AG04449 (cell line): ENCODE measurements at regions of chr16 and their contacts with region 1.

Region 1: DNA sequence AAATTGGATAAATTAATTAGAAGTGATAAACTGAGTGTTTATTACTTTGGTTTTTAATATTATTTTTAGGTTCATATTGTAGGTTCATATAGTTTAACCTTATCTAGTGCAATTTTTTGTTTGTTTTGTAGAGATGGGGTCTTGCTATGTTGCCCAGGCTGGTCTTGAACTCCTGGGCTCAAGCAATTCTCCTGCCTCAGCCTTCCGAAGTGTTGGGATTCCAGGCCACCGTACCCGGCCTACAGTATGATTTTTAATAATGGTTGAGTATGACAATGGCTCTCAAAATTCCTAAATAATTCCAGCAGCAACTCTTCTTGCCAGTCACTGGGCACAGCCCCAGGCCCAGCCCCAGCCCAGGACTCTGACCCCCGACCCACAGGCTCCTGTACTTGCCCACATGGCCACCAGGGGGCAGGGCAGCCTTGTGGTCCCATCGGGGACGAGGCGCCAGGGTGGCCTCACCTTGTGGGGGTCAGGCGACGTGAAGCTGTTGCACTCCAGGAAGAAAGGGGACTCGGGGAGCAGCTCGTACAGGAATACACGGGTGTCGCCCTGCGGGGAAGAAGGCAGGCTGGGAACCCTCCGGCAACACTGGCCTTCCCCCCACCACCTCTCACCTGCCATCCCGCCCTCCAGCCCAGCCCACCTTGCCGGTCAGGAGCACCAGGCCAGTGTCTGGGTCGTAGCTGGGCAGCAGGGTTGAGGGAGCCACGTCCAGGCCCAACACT is 7.9 kb upstream of the PAM16 start:
- DNase-seq: no peak
- H3K4me3 ChIP-seq: no peak overlapping the region
- CTCF ChIP-seq: peak; percentile 95

Region 2: GRCh38 chr16:4176612-4177417 is 182.2 kb before region 1 on chr16:
- CTCF ChIA-PET with region 1: no interaction called
- POLR2A ChIA-PET with region 1: no interaction called
- DNase-seq: no peak
- H3K4me3 ChIP-seq: no peak overlapping the region
- CTCF ChIP-seq: no peak

Region 3: DNA sequence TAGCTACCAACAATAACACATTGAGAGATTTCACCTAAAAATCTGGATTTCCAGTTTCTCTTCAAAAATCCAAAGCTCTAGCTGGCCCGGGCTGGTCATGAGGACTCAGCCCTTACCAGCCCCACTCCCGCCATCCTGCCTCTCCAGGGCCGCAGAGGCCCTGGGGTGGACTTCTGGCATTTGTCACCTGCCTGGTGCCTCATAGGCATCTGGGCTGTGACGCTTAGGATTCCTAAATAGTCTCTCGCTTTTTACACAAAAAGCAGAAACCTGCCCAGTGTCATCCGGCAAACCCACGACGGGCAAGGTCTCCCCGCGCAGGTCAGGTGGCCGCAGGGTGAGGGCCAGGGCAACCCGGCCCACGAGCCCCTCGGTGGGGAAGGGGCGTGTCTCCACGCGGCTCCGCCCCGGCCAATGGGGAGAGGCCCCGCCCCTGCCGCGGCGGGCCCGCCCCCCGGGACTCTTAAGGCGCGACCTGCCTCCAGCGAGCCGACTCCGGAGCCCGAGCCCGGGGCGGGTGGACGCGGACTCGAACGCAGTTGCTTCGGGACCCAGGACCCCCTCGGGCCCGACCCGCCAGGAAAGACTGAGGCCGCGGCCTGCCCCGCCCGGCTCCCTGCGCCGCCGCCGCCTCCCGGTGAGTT is 12.5 kb after region 1 on chr16 and contains the start of gene VASN:
- CTCF ChIA-PET with region 1: interaction called, 81 read pairs
- POLR2A ChIA-PET with region 1: interaction called, 5 read pairs
- DNase-seq: no peak
- H3K4me3 ChIP-seq: peak within 1 kb of the TSS; percentile 93
- CTCF ChIP-seq: no peak

Region 4: DNA sequence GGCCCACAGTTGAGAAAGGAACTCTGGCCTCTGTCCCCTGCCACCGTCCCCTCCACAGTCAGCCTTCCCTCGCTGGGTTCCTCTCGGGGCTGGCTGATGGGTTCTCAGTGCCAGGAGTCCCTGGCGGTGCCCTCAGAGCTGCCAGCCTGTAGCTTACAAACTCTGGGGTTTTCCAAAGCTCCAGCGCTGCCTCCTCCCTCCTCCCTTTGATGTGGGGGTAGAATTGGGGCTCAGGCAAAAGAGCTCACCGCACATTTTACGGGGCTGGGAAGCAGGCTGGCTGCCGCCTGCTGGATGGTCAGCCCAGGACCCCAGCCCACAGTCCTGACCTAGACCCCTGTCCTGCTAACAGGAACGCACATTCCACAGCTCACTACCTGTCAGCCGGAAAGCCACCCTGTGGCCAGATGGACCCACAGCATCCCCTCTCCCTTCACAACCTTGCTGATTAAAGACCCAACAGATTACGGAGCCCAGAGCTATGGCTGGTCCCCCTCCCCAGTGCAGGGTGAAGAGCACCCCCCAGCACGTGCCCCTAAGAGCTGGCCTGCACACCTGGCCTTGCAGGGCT is 18.7 kb after region 1 on chr16:
- CTCF ChIA-PET with region 1: interaction called, 32 read pairs
- POLR2A ChIA-PET with region 1: no interaction called
- DNase-seq: no peak
- H3K4me3 ChIP-seq: no peak overlapping the region; the same call in 1 of the 2 replicates
- CTCF ChIP-seq: peak; percentile 6

Region 5: GRCh38 chr16:4392382-4393239 is 33.6 kb after region 1 on chr16:
- CTCF ChIA-PET with region 1: interaction called, 65 read pairs
- POLR2A ChIA-PET with region 1: no interaction called
- DNase-seq: no peak
- H3K4me3 ChIP-seq: no peak overlapping the region
- CTCF ChIP-seq: no peak

Region 6: DNA sequence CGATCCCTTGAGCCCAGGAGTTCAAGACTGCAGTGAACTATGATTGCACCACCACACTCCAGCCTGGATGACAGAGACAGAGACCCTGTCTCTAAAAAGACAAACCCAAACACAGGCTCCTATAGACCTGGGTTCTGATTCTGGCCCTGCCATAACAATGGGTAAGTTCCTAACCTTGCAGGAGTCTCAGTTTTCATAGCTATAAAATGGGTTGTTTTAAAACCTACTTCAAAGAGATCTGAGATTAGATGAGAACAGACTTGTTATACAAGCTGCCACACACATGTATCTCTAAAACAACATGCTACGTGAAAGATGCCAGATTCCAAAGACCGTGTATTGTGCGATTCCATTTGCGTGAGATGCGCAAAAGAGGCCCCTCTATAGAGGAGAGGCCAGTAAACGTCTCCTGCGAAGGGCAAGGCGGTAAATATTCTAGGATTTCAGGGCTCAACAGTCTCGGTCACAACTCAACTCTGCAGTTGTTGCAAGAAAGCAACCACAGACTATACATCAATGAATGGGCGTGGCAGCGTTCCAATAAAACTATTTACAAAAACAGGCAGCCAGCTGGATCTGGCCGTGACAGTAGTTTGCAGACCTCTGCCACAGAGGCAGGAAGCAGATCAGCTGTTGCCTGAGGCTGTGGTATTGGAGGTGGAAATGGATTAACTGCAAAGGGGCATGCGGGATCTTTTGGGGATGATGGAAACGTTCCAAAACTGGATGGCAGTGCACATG is 51.5 kb after region 1 on chr16:
- CTCF ChIA-PET with region 1: interaction called, 317 read pairs
- POLR2A ChIA-PET with region 1: no interaction called
- DNase-seq: peak; percentile 80
- H3K4me3 ChIP-seq: no peak overlapping the region
- CTCF ChIP-seq: no peak

Region 7: GRCh38 chr16:4416200-4417032 is 57.4 kb after region 1 on chr16 and contains the start of gene CORO7:
- CTCF ChIA-PET with region 1: interaction called, 25 read pairs
- POLR2A ChIA-PET with region 1: no interaction called
- DNase-seq: no peak
- H3K4me3 ChIP-seq: peak within 1 kb of the TSS; percentile 78
- CTCF ChIP-seq: no peak